K562 (cell line): ENCODE measurements at regions of chr7 and their contacts with region 1.

Region 1: DNA sequence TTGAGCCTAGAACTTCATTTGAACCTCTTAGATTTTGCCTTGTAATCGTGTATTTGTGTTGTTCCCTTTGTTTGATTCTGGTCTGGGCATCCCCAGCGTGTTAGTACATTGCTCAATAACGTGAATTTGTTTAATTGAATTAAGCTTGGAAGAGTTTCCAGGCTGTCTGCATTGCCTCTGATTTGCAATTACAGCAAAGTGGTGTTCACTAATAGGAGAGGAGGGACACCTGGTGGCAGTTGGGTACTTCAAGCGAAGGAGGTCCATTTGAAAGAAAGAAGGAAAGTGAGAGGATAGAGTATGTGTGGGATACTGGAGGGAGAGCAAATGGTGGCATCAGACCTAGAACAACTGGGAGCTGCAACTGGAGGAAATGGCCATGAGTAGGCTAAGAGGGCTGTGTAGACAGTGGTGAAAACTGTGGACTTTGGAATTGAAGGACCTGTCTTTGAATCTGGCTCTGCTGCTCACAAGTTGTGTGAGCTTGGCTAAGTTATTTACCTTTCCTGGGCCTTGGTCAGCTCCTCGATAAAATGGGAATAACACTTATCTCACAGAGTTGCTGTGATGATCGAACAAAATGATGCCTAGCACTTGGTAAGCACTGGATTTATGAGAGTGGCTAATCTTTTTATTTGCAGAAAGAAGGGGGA is 15.1 kb downstream of the LSMEM1 start:
- DNase-seq: peak in 3 of 4 experiments; percentile 42 to 73 (median 53)
- ATAC-seq: peak; percentile 86
- H3K4me3 ChIP-seq: no peak overlapping the region
- H3K27ac ChIP-seq: no peak overlapping the region
- H3K4me1 ChIP-seq: no peaks in the 10 kb centered on the region
- H3K27me3 ChIP-seq: peaks cover 11 to 13% of the 10 kb centered on the region in 2 experiments
- CTCF ChIP-seq: peak; percentile 75 to 86 (median 75)
- EP300 ChIP-seq: no peak
- POLR2A ChIP-seq: no peak
- RAD21 ChIP-seq: peak; percentile 94 to 95

Region 2: DNA sequence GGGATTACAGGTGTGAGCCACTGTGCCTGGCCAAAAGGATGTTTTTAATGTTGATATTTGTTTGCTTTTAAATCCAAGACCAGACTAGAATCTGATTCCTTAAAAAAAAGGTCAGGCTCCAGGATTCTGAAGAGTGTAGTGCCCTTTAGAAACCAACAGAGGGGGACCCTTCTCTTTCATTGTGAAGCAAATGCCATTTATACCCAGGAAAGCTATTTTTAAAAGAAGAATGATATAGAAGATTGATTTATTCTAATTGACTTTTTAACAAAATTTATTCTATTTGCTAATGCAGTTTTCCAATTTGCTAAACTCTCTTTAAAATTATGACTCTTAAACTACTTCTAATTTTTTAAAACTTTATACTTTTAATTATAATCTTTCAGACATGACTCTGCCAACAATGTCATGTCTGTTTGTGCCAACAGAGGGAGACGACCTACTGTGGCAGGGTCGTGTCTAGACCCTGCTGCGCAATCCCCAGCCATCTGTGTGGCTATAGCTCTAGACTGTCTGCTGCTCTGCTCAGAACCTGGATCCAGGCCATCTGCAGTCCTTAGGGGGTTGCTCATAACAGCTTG is 732.6 kb before region 1 on chr7:
- CTCF ChIA-PET with region 1: interaction called, 15 read pairs
- POLR2A ChIA-PET with region 1: no interaction called
- in situ Hi-C with region 1: no loop called
- intact Hi-C with region 1: no loop called
- DNase-seq: peak in 2 of 4 experiments; percentile 43 to 61
- ATAC-seq: peak; percentile 83
- H3K4me3 ChIP-seq: no peak overlapping the region
- H3K27ac ChIP-seq: no peak overlapping the region
- H3K4me1 ChIP-seq: no peaks in the 10 kb centered on the region
- H3K27me3 ChIP-seq: peaks cover 0 to 3% of the 10 kb centered on the region in 2 experiments; a peak in 1 of 5 replicates
- CTCF ChIP-seq: peak; percentile 51 to 81 (median 55); a peak in 5 of 6 replicates
- EP300 ChIP-seq: no peak
- POLR2A ChIP-seq: no peak
- RAD21 ChIP-seq: peak; percentile 82 to 88

Region 3: DNA sequence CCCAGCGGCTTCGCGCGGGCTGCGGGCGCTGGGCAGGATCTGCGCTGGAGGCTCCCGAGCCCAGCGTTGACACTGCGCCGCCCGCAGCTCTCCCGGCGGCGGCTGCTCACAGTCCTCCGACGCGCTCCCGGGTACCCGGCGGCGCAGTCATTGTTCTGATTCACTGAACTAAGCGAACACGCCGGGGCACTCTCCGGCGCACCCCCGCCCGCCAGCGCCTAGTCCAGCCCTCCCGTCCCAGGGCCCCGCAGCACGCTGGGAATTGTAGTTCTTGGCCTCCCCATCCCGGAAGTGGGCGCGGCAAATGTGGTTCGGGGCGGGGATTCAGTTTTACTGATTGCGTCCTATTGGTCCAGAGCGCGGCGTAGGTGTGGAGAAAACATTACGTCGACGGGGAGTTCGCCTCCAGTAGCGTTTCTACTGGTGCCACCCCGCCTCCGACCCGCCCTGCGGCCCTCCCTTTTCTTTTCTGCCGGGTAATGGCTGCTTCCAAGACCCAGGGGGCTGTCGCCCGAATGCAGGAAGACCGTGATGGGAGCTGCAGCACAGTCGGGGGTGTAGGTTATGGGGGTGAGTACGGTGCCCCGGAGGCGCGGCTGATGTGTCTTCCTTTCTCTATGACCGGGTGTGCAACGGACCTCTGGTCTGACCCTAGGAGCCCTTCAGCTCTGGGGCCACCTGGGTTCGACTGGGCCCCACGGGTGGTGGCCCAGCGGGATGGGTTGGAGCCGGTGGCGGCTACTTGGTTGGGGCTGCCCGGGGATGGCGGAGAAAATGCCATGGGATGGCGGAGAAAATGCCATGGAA is 289.5 kb before region 1 on chr7 and contains the starts of genes DOCK4 and ZNF277:
- CTCF ChIA-PET with region 1: no interaction called
- POLR2A ChIA-PET with region 1: no interaction called
- in situ Hi-C with region 1: no loop called
- intact Hi-C with region 1: loop called (anchors 10 kb)
- DNase-seq: peak; percentile 98 to 100 (median 98)
- ATAC-seq: peak; percentile 97
- H3K4me3 ChIP-seq: peak within 1 kb of the TSS; percentile 79
- H3K27ac ChIP-seq: peak within 1 kb of the TSS; percentile 52
- H3K4me1 ChIP-seq: peaks cover 12 to 16% of the 10 kb centered on the region in 2 experiments; a peak in 4 of 5 replicates
- H3K27me3 ChIP-seq: peaks cover 23 to 24% of the 10 kb centered on the region in 2 experiments
- CTCF ChIP-seq: peak in 1 of 3 experiments; percentile 10; a peak in 1 of 6 replicates
- EP300 ChIP-seq: no peak; the same call in 1 of the 2 replicates
- POLR2A ChIP-seq: peak; percentile 80
- RAD21 ChIP-seq: no peak
- polyA plus RNA-seq, gene DOCK4: 0.42 to 0.45 TPM
- polyA plus RNA-seq, gene ZNF277: 27.4 to 27.7 TPM

Region 4: DNA sequence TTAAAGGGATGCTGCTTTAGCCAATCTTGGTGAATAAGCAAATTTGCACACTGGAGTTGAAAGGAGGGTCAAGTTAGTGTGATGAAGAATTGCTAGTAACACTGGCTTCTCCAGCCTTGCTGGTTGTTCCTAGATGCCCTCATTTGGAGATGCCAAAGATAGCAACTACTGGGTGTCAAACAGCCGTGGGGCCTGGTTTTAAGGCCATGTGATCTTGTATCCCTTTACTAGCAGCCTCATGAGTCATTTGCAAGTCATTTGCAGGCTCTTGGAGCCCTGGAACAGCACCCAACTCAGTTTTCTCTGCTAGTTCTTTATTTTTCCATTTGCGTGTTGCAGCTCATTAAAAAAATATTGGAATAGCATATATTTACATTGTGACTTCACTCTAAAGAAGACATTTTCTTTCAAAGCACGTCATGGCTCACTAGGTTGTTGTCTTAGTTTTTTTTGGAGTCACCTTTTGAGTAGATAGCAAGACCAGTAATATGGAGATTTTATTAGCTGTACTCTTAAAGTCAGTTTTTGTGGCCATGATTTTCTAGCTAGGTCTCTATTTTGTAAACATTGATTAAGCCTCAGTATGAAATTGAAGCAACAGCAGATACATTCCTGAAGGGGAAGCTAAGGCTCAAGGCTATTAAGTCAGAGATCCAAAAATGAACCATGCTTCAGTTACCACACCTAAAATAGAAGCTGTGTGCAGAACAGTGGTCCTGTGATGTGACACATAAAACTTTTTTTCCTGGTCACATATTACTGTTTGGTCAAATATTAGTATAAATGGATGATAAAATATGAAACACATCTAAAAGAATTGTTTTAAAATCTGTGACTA is 13.9 kb before region 1 on chr7:
- CTCF ChIA-PET with region 1: interaction called, 3 read pairs
- POLR2A ChIA-PET with region 1: interaction called, 3 read pairs
- in situ Hi-C with region 1: no loop called
- intact Hi-C with region 1: loop called (anchors 1 kb)
- DNase-seq: peak in 2 of 4 experiments; percentile 50 to 67
- ATAC-seq: peak; percentile 49
- H3K4me3 ChIP-seq: no peak overlapping the region
- H3K27ac ChIP-seq: no peak overlapping the region
- H3K4me1 ChIP-seq: peaks cover 4 to 24% of the 10 kb centered on the region in 2 experiments; a peak in 3 of 5 replicates
- H3K27me3 ChIP-seq: no peaks in the 10 kb centered on the region
- CTCF ChIP-seq: no peak
- EP300 ChIP-seq: no peak
- POLR2A ChIP-seq: no peak
- RAD21 ChIP-seq: no peak

Region 5: DNA sequence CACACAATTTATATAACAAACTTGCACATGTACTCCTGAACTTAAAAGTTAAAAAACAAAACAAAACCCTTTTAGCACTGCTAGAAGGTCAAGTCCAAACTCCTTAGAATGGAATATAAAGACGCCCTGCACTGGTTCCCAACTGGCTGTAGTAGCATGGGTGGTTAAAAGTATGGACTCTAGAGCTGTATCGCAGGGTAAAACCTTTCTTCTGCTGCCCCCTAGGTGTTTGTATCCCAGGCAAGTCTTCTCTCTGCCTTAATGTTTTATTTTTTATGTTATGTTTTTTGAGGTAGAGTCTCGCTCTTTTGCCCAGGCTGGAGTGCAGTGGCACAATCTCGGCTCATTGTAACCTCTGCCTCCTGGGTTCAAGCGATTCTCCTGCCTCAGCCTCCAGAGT is 20.1 kb after region 1 on chr7:
- CTCF ChIA-PET with region 1: no interaction called
- POLR2A ChIA-PET with region 1: no interaction called
- in situ Hi-C with region 1: no loop called
- intact Hi-C with region 1: no loop called
- DNase-seq: peak in 2 of 4 experiments; percentile 23 to 40
- ATAC-seq: peak; percentile 85
- H3K4me3 ChIP-seq: no peak overlapping the region
- H3K27ac ChIP-seq: no peak overlapping the region
- H3K4me1 ChIP-seq: no peaks in the 10 kb centered on the region
- H3K27me3 ChIP-seq: peaks cover 52 to 57% of the 10 kb centered on the region in 2 experiments
- CTCF ChIP-seq: peak; percentile 18 to 49 (median 23); a peak in 3 of 6 replicates
- EP300 ChIP-seq: no peak
- POLR2A ChIP-seq: no peak
- RAD21 ChIP-seq: peak; percentile 20 to 52; a peak in 2 of 4 replicates

Region 6: DNA sequence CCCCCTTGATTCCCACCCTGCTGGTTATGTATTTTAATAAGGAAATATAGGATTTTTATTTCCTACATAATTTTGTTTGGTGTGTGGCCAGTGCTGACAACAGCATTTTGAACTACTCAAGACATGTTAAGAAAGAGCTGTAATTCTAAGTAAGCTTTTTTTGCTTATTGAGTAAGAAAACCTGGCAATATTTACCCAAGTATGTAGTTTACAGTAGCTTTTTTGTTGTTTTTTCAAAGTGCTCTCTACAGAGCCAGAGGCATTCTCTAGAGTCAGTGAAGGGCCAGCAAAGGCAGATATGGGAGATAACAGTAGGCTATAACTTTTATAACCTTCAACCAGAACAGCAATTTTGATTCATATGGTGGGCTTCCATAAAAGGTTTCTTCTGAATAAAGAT is 357.5 kb after region 1 on chr7:
- CTCF ChIA-PET with region 1: no interaction called
- POLR2A ChIA-PET with region 1: no interaction called
- in situ Hi-C with region 1: no loop called
- intact Hi-C with region 1: no loop called
- DNase-seq: no peak
- ATAC-seq: no peak
- H3K4me3 ChIP-seq: no peak overlapping the region
- H3K27ac ChIP-seq: no peak overlapping the region
- H3K4me1 ChIP-seq: no peaks in the 10 kb centered on the region; a peak in 1 of 5 replicates
- H3K27me3 ChIP-seq: no peaks in the 10 kb centered on the region
- CTCF ChIP-seq: no peak
- EP300 ChIP-seq: no peak
- POLR2A ChIP-seq: no peak
- RAD21 ChIP-seq: no peak